GM12878 (cell line): ENCODE measurements at regions of chr5 and their contacts with region 1.

Region 1: DNA sequence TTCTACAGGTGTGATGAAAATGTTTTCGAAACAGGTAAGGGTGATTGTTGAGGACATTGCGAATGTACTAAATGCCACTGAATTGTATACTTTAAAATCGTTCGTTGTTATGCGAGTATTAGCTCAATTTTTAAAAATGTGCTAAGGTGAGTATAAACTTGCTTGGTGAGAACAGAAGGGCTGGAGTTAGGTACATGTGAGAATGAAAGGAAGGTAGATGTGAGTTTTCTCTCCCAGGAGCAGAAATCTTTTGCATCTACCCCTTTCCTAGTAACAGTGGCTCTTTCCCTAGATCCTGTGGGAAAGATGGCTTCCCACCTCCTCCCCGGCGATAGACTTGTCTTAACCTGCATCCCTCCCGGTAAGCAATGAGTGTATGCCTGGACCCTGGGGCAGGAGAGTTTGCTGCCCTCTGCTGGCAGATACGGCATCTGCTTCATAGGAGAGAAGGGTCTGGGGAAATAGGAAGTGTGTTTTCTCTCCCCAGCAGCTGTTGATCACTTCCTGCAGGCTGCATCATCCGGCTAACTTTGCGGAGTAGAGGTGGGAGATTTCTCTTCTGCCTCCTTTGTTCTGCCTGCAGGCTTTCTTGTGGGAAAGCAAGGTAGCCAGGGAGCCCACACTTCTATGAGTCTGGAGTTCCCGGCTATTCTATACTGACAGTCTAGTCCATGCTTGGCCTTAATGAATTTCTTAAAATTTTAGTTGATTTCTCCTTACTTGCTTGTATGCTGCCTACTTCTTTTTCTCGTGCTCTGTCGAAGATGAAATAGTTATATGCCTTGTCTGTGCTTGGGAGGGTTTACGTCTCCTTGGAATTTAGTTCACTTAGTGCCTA is 373.3 kb upstream of the SEMA6A start:
- DNase-seq: peak; percentile 87
- ATAC-seq: peak; percentile 100
- H3K4me3 ChIP-seq: no peak overlapping the region
- H3K27ac ChIP-seq: no peak overlapping the region
- H3K4me1 ChIP-seq: peaks cover 3% of the 10 kb centered on the region
- H3K27me3 ChIP-seq: peaks cover 0 to 1% of the 10 kb centered on the region in 2 experiments; a peak in 1 of 4 replicates
- CTCF ChIP-seq: peak; percentile 88 to 94 (median 92)
- EP300 ChIP-seq: 0 out of 4 replicates have a peak, but pooled peaks of 1 of the 2 experiments have one; percentile 35
- POLR2A ChIP-seq: no peak
- RAD21 ChIP-seq: peak; percentile 98

Region 2: GRCh38 chr5:116557669-116558271 is 390.1 kb before region 1 on chr5:
- CTCF ChIA-PET with region 1: interaction called, 18 read pairs
- POLR2A ChIA-PET with region 1: no interaction called
- RAD21 ChIA-PET with region 1: interaction called, 4 read pairs
- SMC1A ChIA-PET with region 1: interaction called, 3 read pairs
- in situ Hi-C with region 1: no loop called
- intact Hi-C with region 1: no loop called
- DNase-seq: no peak
- ATAC-seq: peak; percentile 65
- H3K4me3 ChIP-seq: no peak overlapping the region
- H3K27ac ChIP-seq: no peak overlapping the region
- H3K4me1 ChIP-seq: no peaks in the 10 kb centered on the region
- H3K27me3 ChIP-seq: no peaks in the 10 kb centered on the region
- CTCF ChIP-seq: peak; percentile 48 to 61 (median 55); a peak in 5 of 6 replicates
- EP300 ChIP-seq: no peak
- POLR2A ChIP-seq: no peak
- RAD21 ChIP-seq: peak; percentile 79

Region 3: GRCh38 chr5:116702776-116703175 is 245.1 kb before region 1 on chr5:
- CTCF ChIA-PET with region 1: no interaction called
- POLR2A ChIA-PET with region 1: no interaction called
- RAD21 ChIA-PET with region 1: no interaction called
- SMC1A ChIA-PET with region 1: interaction called, 3 read pairs
- in situ Hi-C with region 1: no loop called
- intact Hi-C with region 1: loop called (anchors 5 kb)
- DNase-seq: no peak
- ATAC-seq: peak; percentile 72
- H3K4me3 ChIP-seq: no peak overlapping the region
- H3K27ac ChIP-seq: peak overlapping the region; percentile 31
- H3K4me1 ChIP-seq: peaks cover 26% of the 10 kb centered on the region
- H3K27me3 ChIP-seq: no peaks in the 10 kb centered on the region
- CTCF ChIP-seq: no peak
- EP300 ChIP-seq: peak in 1 of 2 experiments; percentile 66; a peak in 1 of 4 replicates
- POLR2A ChIP-seq: no peak
- RAD21 ChIP-seq: no peak

Region 4: DNA sequence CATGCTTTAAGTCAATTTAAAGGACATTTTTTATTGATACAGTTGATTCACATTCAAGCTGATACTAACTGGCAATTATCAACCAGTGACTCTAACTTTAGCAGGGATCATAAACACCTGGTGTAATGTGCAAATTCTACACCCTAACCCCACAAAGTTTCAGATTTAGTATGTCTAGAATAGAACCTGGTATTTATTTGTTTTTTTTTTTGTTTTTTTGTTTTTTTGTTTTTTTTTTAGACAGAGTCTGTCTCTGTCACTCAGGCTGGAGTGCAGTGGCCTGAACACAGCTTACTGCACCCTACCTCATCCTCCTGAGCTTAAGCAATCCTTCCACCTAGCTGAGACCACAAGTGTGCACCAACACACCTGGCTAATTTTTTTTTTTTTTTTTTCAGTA is 62.1 kb before region 1 on chr5:
- CTCF ChIA-PET with region 1: no interaction called
- POLR2A ChIA-PET with region 1: no interaction called
- RAD21 ChIA-PET with region 1: interaction called, 16 read pairs
- SMC1A ChIA-PET with region 1: interaction called, 5 read pairs
- in situ Hi-C with region 1: no loop called
- intact Hi-C with region 1: no loop called
- DNase-seq: no peak
- ATAC-seq: peak; percentile 72
- H3K4me3 ChIP-seq: no peak overlapping the region
- H3K27ac ChIP-seq: no peak overlapping the region
- H3K4me1 ChIP-seq: peaks cover 23% of the 10 kb centered on the region
- H3K27me3 ChIP-seq: no peaks in the 10 kb centered on the region
- CTCF ChIP-seq: no peak; a peak in 1 of 6 replicates
- EP300 ChIP-seq: peak in 1 of 2 experiments; percentile 49; a peak in 1 of 4 replicates
- POLR2A ChIP-seq: no peak
- RAD21 ChIP-seq: no peak